ENCODE measurements at regions of chr20 and their contacts with region 1.

Region 1: DNA sequence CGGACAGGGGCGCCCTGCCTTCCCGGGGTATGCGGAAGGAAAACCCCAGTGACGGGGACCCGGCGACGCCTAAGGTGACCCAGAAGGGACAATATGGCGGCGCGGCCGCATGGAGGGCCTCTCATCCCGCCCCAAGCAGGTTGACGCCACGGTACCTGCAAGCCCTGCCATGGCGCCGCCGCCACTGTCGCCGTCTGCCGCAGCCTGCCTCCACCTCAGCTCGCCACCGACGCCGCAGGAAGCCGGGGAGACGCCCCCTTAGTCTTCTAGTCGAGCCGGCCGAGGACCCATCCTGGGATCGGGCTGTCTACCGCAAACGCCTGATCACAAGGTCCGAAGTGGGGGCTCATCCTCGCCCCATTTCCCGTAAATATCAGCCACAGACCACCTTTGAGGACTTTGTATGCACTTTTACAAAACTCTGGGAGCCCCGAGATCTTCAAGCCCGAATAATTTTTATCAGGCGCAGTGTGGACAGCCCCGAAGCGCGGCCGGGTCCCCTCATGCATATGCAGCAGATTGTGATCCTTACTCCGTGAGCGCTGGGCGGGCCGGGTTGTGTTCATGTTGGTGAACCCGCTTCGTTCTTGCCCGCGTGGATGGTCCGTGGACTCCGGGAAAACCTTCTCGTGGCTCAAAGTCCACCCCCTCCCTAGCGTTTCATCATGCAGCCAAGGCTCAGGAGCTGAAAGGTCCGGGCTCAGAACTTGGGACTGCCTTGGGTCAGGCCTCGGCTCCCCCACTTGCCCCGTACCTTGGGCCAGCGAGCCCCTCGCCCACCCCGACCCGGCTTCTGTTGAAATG is at the start of gene BLCAP:
- DNase-seq: peak; percentile 84
- ATAC-seq: peak; percentile 67
- H3K4me3 ChIP-seq: peak within 1 kb of the TSS; percentile 92
- H3K27ac ChIP-seq: peak within 1 kb of the TSS; percentile 81
- H3K4me1 ChIP-seq: peaks cover 31% of the 10 kb centered on the region
- H3K27me3 ChIP-seq: no peaks in the 10 kb centered on the region
- CTCF ChIP-seq: no peak
- total RNA-seq, gene BLCAP: 100 and 120 TPM in 2 replicates

Region 2: DNA sequence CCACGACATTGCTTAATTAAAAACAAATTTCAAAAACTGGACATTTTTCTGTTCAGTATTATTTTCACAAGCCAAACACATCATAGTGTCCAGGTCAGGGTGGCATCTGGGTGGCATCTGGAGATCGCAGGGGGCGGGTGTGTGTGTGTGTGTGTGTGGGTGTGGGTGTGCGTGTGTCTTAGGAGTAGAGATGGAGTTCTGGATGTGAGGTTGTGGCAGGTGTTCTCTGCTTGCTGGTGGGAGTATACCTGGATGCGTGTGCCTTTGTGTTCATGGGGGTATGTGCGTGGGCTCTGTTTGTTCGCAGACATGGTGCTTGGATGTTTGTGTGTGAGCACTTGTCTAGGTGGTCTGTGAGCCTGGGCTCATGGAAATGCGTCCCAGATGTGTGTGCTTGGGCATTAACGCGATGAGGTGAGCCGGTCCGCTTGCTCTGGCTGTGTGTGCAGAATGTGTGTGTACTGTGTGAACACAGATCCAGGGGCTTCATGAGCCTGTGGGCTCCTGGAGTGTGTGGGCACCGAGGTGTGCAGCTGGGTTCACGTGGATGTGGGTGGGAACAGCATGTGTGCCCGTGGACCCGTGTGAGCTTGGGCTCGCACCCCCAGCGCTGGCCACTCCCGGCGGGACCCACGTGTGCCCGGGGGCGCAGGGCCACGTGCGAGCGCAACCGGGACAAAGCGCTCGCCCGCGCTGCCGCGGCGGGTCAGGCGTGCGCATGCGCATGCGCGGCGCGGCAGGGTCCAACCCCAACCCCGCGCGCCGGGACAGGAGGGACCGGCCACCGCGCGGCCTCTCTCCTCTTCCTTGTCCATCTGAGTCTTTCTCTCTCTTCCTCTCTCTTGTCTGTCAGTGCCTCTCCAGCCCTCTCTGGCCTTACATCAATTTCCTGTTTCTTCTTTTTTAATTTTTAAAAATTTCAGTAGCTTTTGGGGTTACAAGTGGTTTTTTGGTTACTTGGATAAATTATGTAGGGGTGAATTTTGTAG is 121.5 kb before region 1 on chr20:
- CTCF ChIA-PET with region 1: no interaction called
- POLR2A ChIA-PET with region 1: no interaction called
- intact Hi-C with region 1: loop called (anchors 5 kb)
- DNase-seq: peak; percentile 64
- ATAC-seq: peak; percentile 73
- H3K4me3 ChIP-seq: peak overlapping the region; percentile 59
- H3K27ac ChIP-seq: no peak overlapping the region
- H3K4me1 ChIP-seq: peaks cover 16% of the 10 kb centered on the region
- H3K27me3 ChIP-seq: no peaks in the 10 kb centered on the region
- CTCF ChIP-seq: no peak

Region 3: GRCh38 chr20:37598575-37599342 is 70.9 kb after region 1 on chr20:
- CTCF ChIA-PET with region 1: no interaction called
- POLR2A ChIA-PET with region 1: no interaction called
- intact Hi-C with region 1: no loop called
- DNase-seq: no peak
- ATAC-seq: no peak
- H3K4me3 ChIP-seq: no peak overlapping the region
- H3K27ac ChIP-seq: no peak overlapping the region
- H3K4me1 ChIP-seq: no peaks in the 10 kb centered on the region
- H3K27me3 ChIP-seq: peaks cover 50% of the 10 kb centered on the region
- CTCF ChIP-seq: no peak

Region 4: DNA sequence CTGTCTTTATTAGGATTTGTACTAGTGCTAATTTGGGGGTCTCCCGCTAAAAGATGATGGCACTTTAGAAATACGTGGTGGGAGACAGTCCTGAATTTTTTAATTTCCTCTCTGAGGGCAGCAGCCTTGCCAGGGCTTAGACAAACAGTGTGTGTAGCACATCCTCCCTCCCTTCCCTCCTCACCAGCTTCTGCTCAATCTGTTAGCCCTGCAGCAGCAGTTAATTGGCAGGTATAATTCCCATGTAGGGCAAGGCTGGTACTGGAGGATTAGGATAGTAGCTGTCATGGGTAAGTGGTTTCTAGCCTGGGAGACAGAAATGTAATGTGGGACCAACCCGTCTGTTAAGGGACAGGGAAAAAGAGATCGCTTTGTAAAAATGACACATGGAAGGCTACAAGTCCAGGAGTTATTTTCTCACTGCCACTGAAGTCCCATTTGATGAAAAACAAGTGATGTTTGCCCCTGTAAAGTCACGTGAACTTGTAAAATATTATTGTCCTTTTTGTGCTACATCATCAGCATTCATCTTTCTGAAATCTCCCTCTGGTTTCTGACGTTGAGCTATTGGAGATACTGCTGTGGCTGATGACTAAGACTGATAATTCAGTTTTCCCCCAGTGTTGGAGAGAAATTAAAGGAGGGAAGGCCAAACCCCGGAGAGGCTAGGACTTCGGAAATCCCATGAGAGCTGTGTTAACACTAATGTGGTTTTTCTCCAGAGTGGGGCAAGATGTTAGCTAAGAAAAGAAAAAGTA is 206.6 kb after region 1 on chr20:
- CTCF ChIA-PET with region 1: no interaction called
- POLR2A ChIA-PET with region 1: no interaction called
- intact Hi-C with region 1: no loop called
- DNase-seq: no peak
- ATAC-seq: no peak
- H3K4me3 ChIP-seq: no peak overlapping the region
- H3K27ac ChIP-seq: no peak overlapping the region
- H3K4me1 ChIP-seq: no peaks in the 10 kb centered on the region
- H3K27me3 ChIP-seq: no peaks in the 10 kb centered on the region
- CTCF ChIP-seq: no peak

Region 5: DNA sequence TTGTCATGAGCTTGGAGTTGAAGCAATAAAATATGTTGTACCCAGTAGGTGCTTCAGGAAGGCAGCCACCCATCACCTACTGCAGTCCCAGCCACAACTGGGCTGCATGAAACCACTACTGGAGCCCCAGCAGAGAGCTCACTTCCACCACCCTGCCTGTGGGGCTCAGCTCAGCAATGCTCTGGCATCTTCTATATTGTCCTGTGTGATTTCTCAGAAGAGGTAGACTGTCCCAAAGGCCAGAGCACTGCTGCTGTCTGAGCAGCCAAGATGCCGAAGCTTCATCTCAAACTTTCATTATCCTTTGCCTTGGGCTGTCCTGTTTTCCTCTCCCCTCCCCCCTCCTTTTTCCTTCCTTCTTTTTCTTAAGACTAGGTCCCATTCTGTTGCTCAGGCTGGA is 1561.2 kb after region 1 on chr20:
- CTCF ChIA-PET with region 1: no interaction called
- POLR2A ChIA-PET with region 1: no interaction called
- intact Hi-C with region 1: no loop called
- DNase-seq: no peak
- ATAC-seq: no peak
- H3K4me3 ChIP-seq: no peak overlapping the region
- H3K27ac ChIP-seq: no peak overlapping the region
- H3K4me1 ChIP-seq: no peaks in the 10 kb centered on the region
- H3K27me3 ChIP-seq: peaks cover 11% of the 10 kb centered on the region; the same call in 1 of the 2 replicates
- CTCF ChIP-seq: no peak